AG04449 (cell line): ENCODE measurements at regions of chr17 and their contacts with region 1.

Region 1: DNA sequence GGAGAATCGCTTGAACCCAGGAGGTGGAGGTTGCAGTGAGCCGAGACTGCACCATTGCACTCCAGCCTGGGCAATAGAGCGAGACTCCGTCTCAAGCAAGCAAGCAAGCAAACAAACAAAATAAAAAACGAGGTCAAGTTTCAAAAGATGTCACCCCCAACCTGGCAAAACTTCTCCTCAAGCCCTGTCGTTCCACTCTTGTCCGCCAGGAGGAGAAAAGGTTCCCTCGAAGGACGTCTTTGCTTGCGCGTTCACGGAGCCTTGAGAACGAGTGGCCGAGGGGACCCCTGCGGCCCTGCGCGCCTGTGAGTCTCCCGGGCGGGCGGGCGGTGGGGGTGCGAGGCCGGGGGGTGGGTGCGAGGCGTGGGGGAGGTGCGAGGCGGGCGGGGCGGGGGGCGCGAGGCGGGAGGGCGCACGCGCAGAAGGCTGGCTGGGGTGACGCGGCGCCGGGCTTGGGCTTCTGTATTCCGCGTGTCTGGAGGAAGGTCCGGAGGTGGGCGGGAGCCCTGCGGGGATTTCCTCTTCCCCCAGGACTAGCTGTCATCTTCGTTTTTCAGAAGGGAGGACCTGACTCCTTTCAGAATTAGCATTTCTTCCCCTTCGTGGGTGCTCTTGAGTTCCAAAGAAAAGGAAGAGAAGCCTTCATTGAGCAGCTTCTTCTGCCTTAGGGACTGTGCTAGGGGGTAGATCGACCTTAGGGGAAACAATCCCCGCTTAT is 3.7 kb downstream of the SLC52A1 start:
- DNase-seq: no peak
- H3K4me3 ChIP-seq: peak overlapping the region; percentile 50
- CTCF ChIP-seq: peak; percentile 83

Region 2: DNA sequence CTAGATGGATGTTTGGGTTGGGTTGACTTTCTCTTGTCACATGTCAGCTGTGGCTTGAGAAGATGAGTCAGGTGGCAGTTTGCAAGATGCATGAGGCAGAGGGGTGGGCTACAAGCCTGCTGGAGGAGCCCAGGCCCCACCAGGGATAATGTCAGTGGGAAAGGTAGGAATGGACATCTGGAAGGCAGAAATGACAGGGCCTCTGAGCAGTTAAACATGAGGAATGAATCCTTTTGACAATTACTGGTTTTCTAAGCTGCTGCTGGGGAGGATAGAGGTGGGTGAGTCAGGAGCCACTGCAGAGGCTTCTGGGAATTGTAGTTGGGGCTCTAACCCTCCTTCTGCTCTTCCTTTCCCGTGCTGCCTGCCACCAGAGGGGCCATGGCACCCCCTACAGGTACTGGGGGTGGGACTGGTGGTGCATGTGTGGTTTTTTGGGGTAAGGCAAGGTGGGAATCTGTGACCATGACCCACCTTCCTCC is 12.0 kb before region 1 on chr17:
- CTCF ChIA-PET with region 1: interaction called, 14 read pairs
- POLR2A ChIA-PET with region 1: interaction called, 3 read pairs
- DNase-seq: no peak
- H3K4me3 ChIP-seq: no peak overlapping the region
- CTCF ChIP-seq: peak; percentile 6

Region 3: GRCh38 chr17:5043524-5043923 is 12.0 kb after region 1 on chr17:
- CTCF ChIA-PET with region 1: interaction called, 18 read pairs
- POLR2A ChIA-PET with region 1: no interaction called
- DNase-seq: no peak
- H3K4me3 ChIP-seq: no peak overlapping the region
- CTCF ChIP-seq: no peak

Region 4: GRCh38 chr17:5055543-5055942 is 24.0 kb after region 1 on chr17:
- CTCF ChIA-PET with region 1: interaction called, 78 read pairs
- POLR2A ChIA-PET with region 1: no interaction called
- DNase-seq: no peak
- H3K4me3 ChIP-seq: no peak overlapping the region
- CTCF ChIP-seq: no peak